Lower lobe of right lung (tissue), 2 donors: ENCODE measurements at regions of chr16 and their contacts with region 1.

Region 1: DNA sequence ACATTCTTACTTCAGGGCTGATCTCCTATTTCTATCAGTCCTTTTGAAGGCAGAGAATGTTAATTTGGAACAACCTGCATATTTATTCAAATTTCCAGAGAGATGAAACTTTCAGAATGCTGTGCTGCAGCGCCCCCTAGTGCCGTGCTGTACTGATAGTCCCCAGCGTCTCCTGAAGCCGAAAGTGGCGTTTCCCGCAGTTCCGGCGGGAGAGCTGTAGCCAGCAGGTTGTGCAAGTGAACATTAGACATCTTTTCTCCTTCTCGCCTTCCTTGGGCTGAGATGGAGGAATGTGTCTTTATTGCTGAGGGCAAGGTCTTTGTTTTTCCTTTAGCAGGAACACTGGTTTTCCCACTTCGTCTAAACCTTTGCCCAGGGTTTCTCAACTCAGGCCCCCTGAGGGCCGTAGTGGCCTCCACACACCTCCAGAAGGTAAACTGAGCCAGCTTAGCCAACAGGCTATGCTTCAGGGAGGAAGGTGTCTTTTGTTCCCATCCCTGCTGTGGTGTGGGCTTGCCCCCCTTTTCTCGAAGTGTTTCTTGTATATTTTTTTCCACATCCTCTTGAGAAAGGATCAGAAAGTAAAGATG is 26.4 kb downstream of the USP10 start:
- DNase-seq: peak; percentile 93
- ATAC-seq: peak; percentile 86 to 94
- H3K4me3 ChIP-seq: peak overlapping the region; percentile 21
- H3K27ac ChIP-seq: no peak overlapping the region
- H3K4me1 ChIP-seq: peaks cover 65% of the 10 kb centered on the region
- H3K27me3 ChIP-seq: no peaks in the 10 kb centered on the region
- CTCF ChIP-seq: peak; percentile 96

Region 2: DNA sequence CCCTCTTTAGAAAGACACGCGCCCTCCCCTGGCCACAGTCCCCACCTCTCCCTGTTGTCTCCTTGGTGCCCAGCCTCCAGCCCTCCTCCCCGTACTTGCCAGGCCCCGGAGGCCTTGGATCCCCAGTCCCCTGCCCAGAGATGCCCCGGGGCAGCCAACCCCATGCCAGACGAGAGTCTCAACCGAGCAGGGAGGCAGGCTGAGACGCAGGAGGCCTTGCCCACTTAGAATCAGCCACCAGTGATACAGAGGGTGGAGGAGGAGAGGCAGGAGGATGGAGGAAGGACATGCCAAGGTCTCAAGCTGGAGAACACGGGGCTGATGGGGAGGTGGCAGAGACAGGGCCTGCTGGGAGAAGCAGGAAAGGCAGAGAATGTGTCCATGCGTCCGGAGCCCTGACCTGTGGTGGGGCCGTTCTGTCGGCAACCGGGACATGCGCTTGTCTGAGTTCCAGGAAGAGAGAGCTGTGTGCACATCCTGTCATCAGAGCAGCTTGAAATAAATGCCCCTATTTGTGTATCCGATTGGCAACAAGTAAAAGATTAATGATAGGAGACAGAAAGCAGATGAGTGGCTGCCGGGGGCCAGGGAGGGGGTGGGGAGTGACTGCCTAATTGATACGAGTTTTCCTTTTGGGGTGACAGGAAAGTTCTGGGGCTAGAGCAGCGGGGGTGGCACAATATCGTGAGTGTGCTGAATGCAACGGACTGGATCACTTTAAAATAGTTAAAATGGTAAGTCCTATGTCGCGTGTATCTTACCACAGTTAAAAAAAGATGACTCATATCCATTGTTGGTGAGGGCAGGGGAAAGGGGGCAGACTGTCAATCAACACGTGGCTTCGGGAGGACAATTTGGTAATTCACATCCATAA is 177.0 kb before region 1 on chr16:
- intact Hi-C with region 1: no loop called
- DNase-seq: peak; percentile 46
- ATAC-seq: peak; percentile 38 to 53
- H3K4me3 ChIP-seq: no peak overlapping the region
- H3K27ac ChIP-seq: peak overlapping the region; percentile 66
- H3K4me1 ChIP-seq: no peaks in the 10 kb centered on the region
- H3K27me3 ChIP-seq: no peaks in the 10 kb centered on the region
- CTCF ChIP-seq: no peak

Region 3: GRCh38 chr16:84672276-84673202 is 53.6 kb before region 1 on chr16:
- intact Hi-C with region 1: loop called (anchors 10 kb)
- DNase-seq: peak; percentile 88
- ATAC-seq: peak; percentile 91 to 92
- H3K4me3 ChIP-seq: no peak overlapping the region
- H3K27ac ChIP-seq: no peak overlapping the region
- H3K4me1 ChIP-seq: no peaks in the 10 kb centered on the region
- H3K27me3 ChIP-seq: no peaks in the 10 kb centered on the region
- CTCF ChIP-seq: peak; percentile 93

Region 4: GRCh38 chr16:84765616-84766580 is 39.7 kb after region 1 on chr16:
- intact Hi-C with region 1: no loop called
- DNase-seq: no peak
- ATAC-seq: peak in 1 of 2 donors; percentile 11
- H3K4me3 ChIP-seq: no peak overlapping the region
- H3K27ac ChIP-seq: no peak overlapping the region
- H3K4me1 ChIP-seq: no peaks in the 10 kb centered on the region
- H3K27me3 ChIP-seq: no peaks in the 10 kb centered on the region
- CTCF ChIP-seq: no peak

Region 5: GRCh38 chr16:85086347-85087291 is 360.4 kb after region 1 on chr16:
- intact Hi-C with region 1: no loop called
- DNase-seq: peak; percentile 80
- ATAC-seq: peak; percentile 69 to 70
- H3K4me3 ChIP-seq: no peak overlapping the region
- H3K27ac ChIP-seq: no peak overlapping the region
- H3K4me1 ChIP-seq: peaks cover 46% of the 10 kb centered on the region
- H3K27me3 ChIP-seq: no peaks in the 10 kb centered on the region
- CTCF ChIP-seq: peak; percentile 80